CD8-positive, alpha-beta T cell (primary cell): ENCODE measurements at regions of chr21 and their contacts with region 1.

Region 1: GRCh38 chr21:39388038-39388810 is 39.3 kb upstream of the HMGN1 start:
- DNase-seq: peak; percentile 73 to 95 (median 88)
- ATAC-seq: peak; percentile 74
- H3K4me3 ChIP-seq: peak overlapping the region; percentile 45 to 48
- H3K4me3 Mint-ChIP-seq: peak overlapping the region; percentile 88
- H3K27ac ChIP-seq: peak overlapping the region; percentile 13 to 20
- H3K27ac Mint-ChIP-seq: peak overlapping the region; percentile 89
- H3K4me1 ChIP-seq: peaks cover 21% of the 10 kb centered on the region
- H3K4me1 Mint-ChIP-seq: peaks cover 39% of the 10 kb centered on the region
- H3K27me3 ChIP-seq: no peaks in the 10 kb centered on the region
- H3K27me3 Mint-ChIP-seq: no peaks in the 10 kb centered on the region
- CTCF ChIP-seq: peak; percentile 90

Region 2: DNA sequence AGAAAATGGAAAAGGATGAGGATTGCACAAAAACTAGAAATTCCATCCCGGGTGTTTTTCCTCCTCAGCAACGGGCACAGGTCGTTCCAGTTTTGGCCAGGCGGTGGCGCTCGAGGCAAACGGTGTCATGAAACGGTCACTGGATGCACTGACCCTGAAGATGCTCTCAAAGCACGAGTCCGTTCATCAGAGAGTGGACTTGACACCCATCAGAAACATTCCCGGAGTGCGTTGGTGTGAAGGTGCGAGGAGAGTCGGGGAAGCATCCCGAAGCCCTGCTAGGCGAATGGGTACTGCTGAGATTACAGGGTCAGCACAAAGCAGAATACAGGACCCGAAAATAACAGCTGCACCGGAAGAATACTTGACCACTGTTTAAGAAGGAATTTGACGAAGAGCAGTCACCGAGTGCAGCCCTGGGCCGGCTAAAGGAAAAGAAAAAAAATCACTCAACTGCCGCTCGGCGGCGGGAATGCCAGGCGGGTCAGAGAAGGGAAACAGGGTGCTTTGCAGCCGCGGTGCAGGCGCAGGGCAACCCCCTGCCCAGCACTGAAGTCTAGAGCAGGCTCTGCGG is 654.2 kb before region 1 on chr21:
- CTCF ChIA-PET with region 1: no interaction called
- POLR2A ChIA-PET with region 1: no interaction called
- intact Hi-C with region 1: loop called in 1 of 2 experiments (anchors 1 kb)
- DNase-seq: peak; percentile 48 to 84 (median 68)
- ATAC-seq: peak; percentile 62
- H3K4me3 ChIP-seq: peak overlapping the region; percentile 22 to 68
- H3K4me3 Mint-ChIP-seq: peak overlapping the region; percentile 79
- H3K27ac ChIP-seq: no peak overlapping the region
- H3K27ac Mint-ChIP-seq: no peak overlapping the region
- H3K4me1 ChIP-seq: peaks cover 4% of the 10 kb centered on the region
- H3K4me1 Mint-ChIP-seq: peaks cover 9% of the 10 kb centered on the region
- H3K27me3 ChIP-seq: peaks cover 8 to 14% of the 10 kb centered on the region in 2 experiments
- H3K27me3 Mint-ChIP-seq: peaks cover 19% of the 10 kb centered on the region
- CTCF ChIP-seq: peak; percentile 99

Region 3: DNA sequence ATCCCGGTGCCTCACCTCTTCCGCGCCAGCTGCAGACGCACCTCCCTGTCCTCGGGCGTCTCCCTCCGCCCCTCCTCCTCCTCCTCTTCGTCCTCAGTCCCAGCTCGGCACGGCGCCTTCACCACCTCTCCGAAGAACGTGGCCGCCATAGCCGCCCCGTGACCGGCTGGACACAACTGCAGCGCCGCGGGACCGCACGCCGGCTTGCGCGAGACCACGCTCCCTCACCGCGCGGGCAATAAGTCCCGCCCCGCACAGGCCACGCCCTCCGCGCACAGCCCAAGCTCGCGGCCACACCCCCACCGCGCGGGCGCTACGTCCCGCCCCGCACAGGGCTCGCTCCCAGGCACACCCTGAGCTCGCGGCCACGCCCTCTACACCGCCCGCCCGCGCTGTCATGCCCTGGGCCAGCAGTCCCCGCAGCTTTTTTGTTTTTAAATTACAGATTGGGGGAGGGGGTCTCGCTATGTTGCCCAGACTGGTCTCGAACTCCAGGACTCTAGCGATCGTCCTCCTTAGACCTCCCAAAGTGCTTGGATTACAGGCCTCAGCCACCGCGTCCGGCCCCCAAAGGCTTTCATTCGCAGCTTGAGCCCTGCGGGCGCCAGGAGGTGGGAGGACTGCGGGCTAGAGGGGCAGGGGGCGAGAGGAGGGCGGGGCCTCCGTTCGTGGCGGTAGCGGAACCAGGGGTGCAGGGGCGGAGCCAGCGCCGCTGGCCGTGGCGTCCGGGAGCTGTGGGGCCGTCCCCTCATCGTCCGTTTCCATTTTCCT is 204.8 kb before region 1 on chr21 and contains the start of gene PSMG1:
- CTCF ChIA-PET with region 1: no interaction called
- POLR2A ChIA-PET with region 1: interaction called, 3 read pairs
- intact Hi-C with region 1: loop called (anchors 1 kb)
- DNase-seq: peak; percentile 86 to 97 (median 93)
- ATAC-seq: peak; percentile 92
- H3K4me3 ChIP-seq: peak within 1 kb of the TSS; percentile 88 to 89
- H3K4me3 Mint-ChIP-seq: peak within 1 kb of the TSS; percentile 97
- H3K27ac ChIP-seq: peak within 1 kb of the TSS; percentile 73 to 91
- H3K27ac Mint-ChIP-seq: peak within 1 kb of the TSS; percentile 94
- H3K4me1 ChIP-seq: peaks cover 27% of the 10 kb centered on the region
- H3K4me1 Mint-ChIP-seq: peaks cover 42% of the 10 kb centered on the region
- H3K27me3 ChIP-seq: no peaks in the 10 kb centered on the region
- H3K27me3 Mint-ChIP-seq: no peaks in the 10 kb centered on the region
- CTCF ChIP-seq: no peak
- total RNA-seq, gene PSMG1: 4.7 to 6.8 TPM

Region 4: DNA sequence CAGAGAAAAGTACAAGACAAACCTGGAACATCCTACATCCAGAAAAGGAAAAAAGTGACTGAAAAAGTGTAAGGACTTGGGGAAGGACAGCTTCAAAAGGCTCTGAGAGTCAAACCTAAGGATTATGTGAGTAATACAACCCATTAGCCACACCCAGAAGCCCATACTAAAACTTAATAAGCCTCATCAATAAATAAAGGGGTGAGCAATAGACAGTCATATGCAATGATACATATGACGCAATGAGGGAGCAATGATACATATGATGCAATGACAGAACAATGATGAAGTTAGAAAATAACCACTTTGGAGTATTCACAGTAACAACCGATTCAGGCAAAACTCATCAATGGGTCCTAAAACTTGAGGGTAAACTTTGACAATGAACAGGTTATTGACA is 124.9 kb before region 1 on chr21:
- CTCF ChIA-PET with region 1: no interaction called
- POLR2A ChIA-PET with region 1: no interaction called
- intact Hi-C with region 1: loop called in 1 of 2 experiments (anchors 5 kb)
- DNase-seq: no peak
- ATAC-seq: no peak
- H3K4me3 ChIP-seq: no peak overlapping the region
- H3K4me3 Mint-ChIP-seq: no peak overlapping the region
- H3K27ac ChIP-seq: no peak overlapping the region
- H3K27ac Mint-ChIP-seq: no peak overlapping the region
- H3K4me1 ChIP-seq: no peaks in the 10 kb centered on the region
- H3K4me1 Mint-ChIP-seq: peaks cover 13% of the 10 kb centered on the region
- H3K27me3 ChIP-seq: no peaks in the 10 kb centered on the region
- H3K27me3 Mint-ChIP-seq: no peaks in the 10 kb centered on the region
- CTCF ChIP-seq: no peak

Region 5: GRCh38 chr21:39313571-39314142 is 74.6 kb before region 1 on chr21 and contains the start of gene BRWD1:
- CTCF ChIA-PET with region 1: interaction called, 5 read pairs
- POLR2A ChIA-PET with region 1: interaction called, 17 read pairs
- intact Hi-C with region 1: loop called (anchors 1 kb)
- DNase-seq: peak; percentile 69 to 93 (median 80)
- ATAC-seq: peak; percentile 28
- H3K4me3 ChIP-seq: peak within 1 kb of the TSS; percentile 66 to 90
- H3K4me3 Mint-ChIP-seq: peak within 1 kb of the TSS; percentile 90
- H3K27ac ChIP-seq: peak within 1 kb of the TSS; percentile 63 to 70
- H3K27ac Mint-ChIP-seq: peak within 1 kb of the TSS; percentile 90
- H3K4me1 ChIP-seq: peaks cover 21% of the 10 kb centered on the region
- H3K4me1 Mint-ChIP-seq: peaks cover 45% of the 10 kb centered on the region
- H3K27me3 ChIP-seq: no peaks in the 10 kb centered on the region
- H3K27me3 Mint-ChIP-seq: no peaks in the 10 kb centered on the region
- CTCF ChIP-seq: no peak
- total RNA-seq, gene BRWD1: 96.4 to 99.0 TPM

Region 6: GRCh38 chr21:39373644-39374043 is 14.6 kb before region 1 on chr21:
- CTCF ChIA-PET with region 1: interaction called, 6 read pairs
- POLR2A ChIA-PET with region 1: no interaction called
- intact Hi-C with region 1: loop called in 1 of 2 experiments (anchors 2 kb)
- DNase-seq: peak in 3 of 9 experiments; percentile 34 to 51 (median 41)
- ATAC-seq: peak; percentile 77
- H3K4me3 ChIP-seq: no peak overlapping the region
- H3K4me3 Mint-ChIP-seq: no peak overlapping the region
- H3K27ac ChIP-seq: no peak overlapping the region
- H3K27ac Mint-ChIP-seq: no peak overlapping the region
- H3K4me1 ChIP-seq: no peaks in the 10 kb centered on the region
- H3K4me1 Mint-ChIP-seq: no peaks in the 10 kb centered on the region
- H3K27me3 ChIP-seq: no peaks in the 10 kb centered on the region
- H3K27me3 Mint-ChIP-seq: peaks cover 8% of the 10 kb centered on the region
- CTCF ChIP-seq: no peak